ENCODE measurements at regions of chr17 and their contacts with region 1.

Region 1: GRCh38 chr17:46770818-46771560 is 47.5 kb downstream of the WNT3 start:
- DNase-seq: peak; percentile 23
- ATAC-seq: peak; percentile 74
- H3K4me3 ChIP-seq: peak overlapping the region; percentile 57
- H3K27ac ChIP-seq: no peak overlapping the region; the same call in 1 of the 2 replicates
- H3K4me1 ChIP-seq: no peaks in the 10 kb centered on the region; the same call in none of the 2 replicates
- H3K27me3 ChIP-seq: no peaks in the 10 kb centered on the region
- CTCF ChIP-seq: no peak
- POLR2A ChIP-seq: no peak
- RAD21 ChIP-seq: no peak

Region 2: DNA sequence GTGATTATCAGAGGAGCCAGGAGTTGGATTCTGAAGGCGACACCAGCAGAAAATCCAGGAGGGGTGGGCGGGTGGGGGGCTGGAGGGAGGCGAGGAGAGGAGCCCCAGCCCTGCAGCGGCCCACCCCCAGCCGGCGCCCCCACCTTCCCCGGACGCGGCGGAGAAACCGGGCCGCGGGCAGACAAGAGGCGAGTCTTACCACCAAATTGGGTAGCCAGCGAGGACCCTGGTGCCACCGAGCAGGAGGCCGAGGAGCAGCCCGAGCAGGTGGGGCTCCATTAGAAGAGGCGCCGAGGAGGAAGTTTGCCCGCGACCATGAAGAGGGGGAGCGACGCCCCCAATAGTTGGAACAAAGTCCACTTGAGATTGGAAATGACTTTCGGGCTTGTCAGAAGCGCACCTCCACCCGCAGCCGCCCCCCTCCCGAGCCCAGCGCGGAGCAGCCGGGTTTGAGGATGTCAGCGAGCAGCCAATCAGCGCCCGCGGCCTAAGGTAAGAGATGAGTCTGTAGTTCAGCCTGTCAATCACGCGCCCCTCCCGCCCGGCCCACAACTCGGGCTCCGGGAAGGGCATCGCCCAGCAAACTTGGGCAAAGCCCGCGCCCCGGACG is 47.4 kb after region 1 on chr17 and contains the start of gene WNT3:
- CTCF ChIA-PET with region 1: no interaction called
- POLR2A ChIA-PET with region 1: no interaction called
- dilution Hi-C with region 1: no loop called
- in situ Hi-C with region 1: no loop called
- intact Hi-C with region 1: loop called (anchors 5 kb)
- DNase-seq: no peak
- ATAC-seq: peak; percentile 21; the same call in 1 of the 2 replicates
- H3K4me3 ChIP-seq: no peak within 1 kb of the TSS; the same call in 1 of the 2 replicates
- H3K27ac ChIP-seq: no peak within 1 kb of the TSS
- H3K4me1 ChIP-seq: peaks cover 2% of the 10 kb centered on the region; the same call in 1 of the 2 replicates
- H3K27me3 ChIP-seq: peaks cover 93% of the 10 kb centered on the region
- CTCF ChIP-seq: no peak
- POLR2A ChIP-seq: no peak
- RAD21 ChIP-seq: no peak
- total RNA-seq, gene WNT3: 0.56 and 0.72 TPM in 2 replicates

Measured in IMR-90 (cell line).